BJ (cell line): ENCODE measurements at regions of chr22 and their contacts with region 1.

Region 1: DNA sequence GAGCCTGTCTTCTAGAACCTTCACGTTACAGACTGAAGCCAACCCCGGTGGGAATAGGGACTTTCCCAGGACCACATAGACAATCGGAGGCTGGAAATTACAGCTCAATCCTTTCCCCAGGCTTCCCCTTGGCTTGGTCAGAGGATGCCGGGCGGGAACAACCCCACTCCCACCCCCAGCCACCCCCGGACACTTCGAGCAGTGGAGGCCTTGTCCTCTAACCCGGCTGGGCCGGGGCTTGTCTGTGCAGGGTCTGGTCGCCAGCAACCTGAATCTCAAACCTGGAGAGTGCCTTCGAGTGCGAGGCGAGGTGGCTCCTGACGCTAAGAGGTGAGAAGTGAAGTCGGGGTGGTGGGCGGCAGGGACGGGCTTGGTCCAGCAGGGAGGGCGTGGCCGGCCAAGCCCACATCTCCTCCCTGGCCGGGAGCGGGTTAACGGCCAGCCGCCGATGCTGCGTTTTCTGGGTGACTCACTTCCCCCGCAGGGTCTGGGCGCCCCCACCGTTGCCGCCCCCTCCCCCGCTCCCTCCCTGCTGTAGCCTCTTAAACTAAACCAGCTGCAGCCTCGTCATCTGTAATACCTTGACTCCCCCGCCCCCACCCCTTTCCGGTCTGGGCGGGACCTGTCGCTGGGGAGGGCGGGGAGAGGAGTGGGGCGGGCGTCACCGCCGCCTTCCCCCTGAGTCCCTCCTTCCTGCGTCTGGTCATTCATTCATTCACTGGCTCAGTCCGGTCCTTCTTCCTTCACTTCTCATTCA is 1.5 kb downstream of the LGALS1 start:
- DNase-seq: peak; percentile 87
- H3K4me3 ChIP-seq: peak overlapping the region; percentile 93
- H3K27me3 ChIP-seq: no peaks in the 10 kb centered on the region
- CTCF ChIP-seq: no peak

Region 2: GRCh38 chr22:37428649-37429586 is 248.0 kb before region 1 on chr22:
- CTCF ChIA-PET with region 1: no interaction called
- POLR2A ChIA-PET with region 1: no interaction called
- DNase-seq: no peak
- H3K4me3 ChIP-seq: no peak overlapping the region
- H3K27me3 ChIP-seq: peaks cover 16% of the 10 kb centered on the region
- CTCF ChIP-seq: peak; percentile 83

Region 3: DNA sequence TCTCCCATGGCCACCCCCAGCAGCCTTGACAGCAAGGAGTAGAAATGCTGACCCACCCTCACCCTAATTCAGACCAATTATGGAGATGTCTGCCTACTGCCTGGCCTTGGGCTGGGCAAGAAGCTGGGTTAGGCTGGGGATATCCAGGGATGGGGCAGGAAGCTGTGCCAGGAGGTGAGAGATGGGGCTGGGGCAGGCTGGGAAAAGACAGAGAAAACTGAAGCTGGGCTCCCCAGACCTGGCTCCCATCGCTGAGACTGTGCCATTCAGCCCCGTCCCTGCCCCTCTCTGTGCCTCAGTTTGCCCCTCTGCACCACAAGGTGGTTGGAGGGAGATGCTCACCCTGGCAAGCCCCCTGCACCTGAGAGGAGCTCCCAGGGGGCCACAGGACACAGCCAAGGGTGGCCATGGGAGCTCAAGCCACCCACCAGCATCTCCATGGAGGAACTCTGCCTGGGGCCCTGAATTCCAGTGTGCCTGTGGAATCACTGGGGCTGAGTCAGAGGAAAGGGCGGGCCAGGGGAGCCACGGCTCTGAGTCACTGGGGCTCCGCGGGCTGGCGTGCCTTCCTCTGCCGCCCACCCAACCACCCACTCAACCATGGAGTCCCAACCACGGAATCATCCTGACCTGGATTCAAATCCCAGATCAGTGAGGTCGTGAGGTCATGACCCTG is 151.7 kb before region 1 on chr22:
- CTCF ChIA-PET with region 1: no interaction called
- POLR2A ChIA-PET with region 1: no interaction called
- DNase-seq: peak; percentile 50
- H3K4me3 ChIP-seq: no peak overlapping the region
- H3K27me3 ChIP-seq: no peaks in the 10 kb centered on the region
- CTCF ChIP-seq: no peak

Region 4: DNA sequence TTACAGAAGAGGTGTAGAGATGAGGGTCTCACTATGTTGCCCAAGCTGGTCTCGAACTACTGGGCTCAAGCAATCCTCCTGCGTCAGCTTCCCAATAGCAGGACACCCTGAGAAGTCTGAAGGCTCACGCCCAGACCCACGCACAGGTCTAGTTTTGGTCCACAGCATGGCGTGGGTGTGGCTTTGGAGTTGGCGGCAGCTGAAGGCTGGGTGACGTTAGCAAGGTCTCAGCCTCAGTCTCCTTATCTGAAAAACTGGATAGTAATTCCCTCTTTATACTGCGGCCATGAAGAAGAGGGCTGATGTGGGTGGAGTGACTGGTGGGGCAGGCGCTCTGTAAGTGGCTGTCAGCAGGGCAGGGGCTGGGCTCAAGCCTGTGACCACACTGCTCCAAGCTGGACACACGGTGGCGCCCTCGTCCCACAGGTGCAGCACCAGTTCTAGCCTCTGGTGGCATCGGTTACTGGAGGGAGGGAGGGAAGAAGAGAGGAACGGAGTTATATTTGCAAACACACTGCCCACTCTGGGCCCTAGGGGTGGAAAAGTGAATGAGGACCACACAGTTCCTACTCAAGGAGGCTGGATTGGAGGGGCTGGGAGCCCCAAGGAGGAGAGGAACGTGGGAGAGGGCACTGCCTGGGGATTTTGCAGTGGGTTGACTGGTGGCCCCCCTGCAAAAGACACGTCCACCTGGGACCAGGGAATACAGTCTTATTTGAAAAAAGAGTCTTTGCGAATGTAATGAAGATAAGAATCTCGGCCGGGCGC is 138.1 kb before region 1 on chr22:
- CTCF ChIA-PET with region 1: interaction called, 10 read pairs
- POLR2A ChIA-PET with region 1: no interaction called
- DNase-seq: peak; percentile 45
- H3K4me3 ChIP-seq: no peak overlapping the region
- H3K27me3 ChIP-seq: no peaks in the 10 kb centered on the region
- CTCF ChIP-seq: peak; percentile 93

Region 5: GRCh38 chr22:37633625-37634416 is 43.1 kb before region 1 on chr22:
- CTCF ChIA-PET with region 1: interaction called, 265 read pairs
- POLR2A ChIA-PET with region 1: interaction called, 4 read pairs
- DNase-seq: peak; percentile 33
- H3K4me3 ChIP-seq: no peak overlapping the region
- H3K27me3 ChIP-seq: no peaks in the 10 kb centered on the region
- CTCF ChIP-seq: peak; percentile 48; the same call in 1 of the 2 replicates

Region 6: GRCh38 chr22:37696657-37697537 is 20.0 kb after region 1 on chr22 and contains the start of gene TRIOBP:
- CTCF ChIA-PET with region 1: interaction called, 13 read pairs
- POLR2A ChIA-PET with region 1: no interaction called
- DNase-seq: peak; percentile 71
- H3K4me3 ChIP-seq: peak within 1 kb of the TSS; percentile 13; the same call in 1 of the 2 replicates
- H3K27me3 ChIP-seq: no peaks in the 10 kb centered on the region
- CTCF ChIP-seq: peak; percentile 73
- polyA plus RNA-seq, gene TRIOBP: 52.0 and 73.9 TPM in 2 replicates

Region 7: GRCh38 chr22:37807410-37808293 is 130.7 kb after region 1 on chr22 and contains the start of gene GCAT:
- CTCF ChIA-PET with region 1: interaction called, 3 read pairs
- POLR2A ChIA-PET with region 1: interaction called, 19 read pairs
- DNase-seq: peak; percentile 84
- H3K4me3 ChIP-seq: peak within 1 kb of the TSS; percentile 61
- H3K27me3 ChIP-seq: no peaks in the 10 kb centered on the region
- CTCF ChIP-seq: no peak
- polyA plus RNA-seq, gene GCAT: 12.6 and 24.9 TPM in 2 replicates